ENCODE measurements at regions of chr5 and their contacts with region 1.

Region 1: GRCh38 chr5:83564069-83564749 is 92.7 kb downstream of the VCAN start:
- DNase-seq: no peak
- ATAC-seq: peak; percentile 43 to 76 (median 62)
- H3K4me3 ChIP-seq: no peak overlapping the region
- H3K27ac ChIP-seq: peak overlapping the region in 1 of 10 donors; percentile 36
- H3K4me1 ChIP-seq: peaks cover 0 to 17% (median 5%) of the 10 kb centered on the region in 9 donors
- H3K27me3 ChIP-seq: no peaks in the 10 kb centered on the region
- CTCF ChIP-seq: peak; percentile 55 to 79 (median 65)

Region 2: GRCh38 chr5:82312373-82312856 is 1251.8 kb before region 1 on chr5:
- intact Hi-C with region 1: loop called in 4 of 10 experiments (anchors 2 to 10 kb)
- DNase-seq: peak; percentile 54 to 64
- ATAC-seq: peak; percentile 68 to 90 (median 82)
- H3K4me3 ChIP-seq: peak overlapping the region in 2 of 10 donors; percentile 11 to 30
- H3K27ac ChIP-seq: peak overlapping the region in 7 of 10 donors; percentile 12 to 65 (median 37)
- H3K4me1 ChIP-seq: peaks cover 0 to 14% (median 10%) of the 10 kb centered on the region in 9 donors
- H3K27me3 ChIP-seq: no peaks in the 10 kb centered on the region
- CTCF ChIP-seq: peak; percentile 58 to 93 (median 80)

Region 3: GRCh38 chr5:83473346-83474163 is 90.7 kb before region 1 on chr5:
- intact Hi-C with region 1: loop called in 3 of 10 experiments (anchors 5 to 10 kb)
- DNase-seq: peak; percentile 84 to 90
- ATAC-seq: peak; percentile 81 to 92 (median 86)
- H3K4me3 ChIP-seq: peak overlapping the region; percentile 33 to 68 (median 58)
- H3K27ac ChIP-seq: peak overlapping the region; percentile 23 to 86 (median 77)
- H3K4me1 ChIP-seq: peaks cover 0 to 58% (median 36%) of the 10 kb centered on the region in 9 donors
- H3K27me3 ChIP-seq: peaks cover 0 to 84% (median 58%) of the 10 kb centered on the region in 7 donors
- CTCF ChIP-seq: peak; percentile 58 to 94 (median 84)

Region 4: GRCh38 chr5:83498585-83498984 is 65.6 kb before region 1 on chr5:
- intact Hi-C with region 1: no loop called
- DNase-seq: no peak
- ATAC-seq: no peak
- H3K4me3 ChIP-seq: no peak overlapping the region
- H3K27ac ChIP-seq: no peak overlapping the region
- H3K4me1 ChIP-seq: no peaks in the 10 kb centered on the region
- H3K27me3 ChIP-seq: no peaks in the 10 kb centered on the region
- CTCF ChIP-seq: no peak

Measured in heart right ventricle (tissue), 16 donors.